ENCODE measurements at regions of chr5 and their contacts with region 1.

Region 1: GRCh38 chr5:181207214-181208107 is 2.5 kb upstream of the TRIM7 start:
- DNase-seq: peak; percentile 92
- H3K4me3 Mint-ChIP-seq: peak overlapping the region; percentile 91
- H3K27ac Mint-ChIP-seq: peak overlapping the region; percentile 91
- H3K4me1 Mint-ChIP-seq: peaks cover 31% of the 10 kb centered on the region
- H3K27me3 Mint-ChIP-seq: peaks cover 28% of the 10 kb centered on the region

Region 2: GRCh38 chr5:181008136-181008535 is 199.3 kb before region 1 on chr5:
- intact Hi-C with region 1: no loop called
- DNase-seq: no peak
- H3K4me3 Mint-ChIP-seq: no peak overlapping the region
- H3K27ac Mint-ChIP-seq: no peak overlapping the region
- H3K4me1 Mint-ChIP-seq: no peaks in the 10 kb centered on the region
- H3K27me3 Mint-ChIP-seq: peaks cover 2% of the 10 kb centered on the region

Region 3: GRCh38 chr5:181173420-181174342 is 33.8 kb before region 1 on chr5:
- intact Hi-C with region 1: loop called (anchors 1 kb)
- DNase-seq: peak; percentile 88
- H3K4me3 Mint-ChIP-seq: peak overlapping the region; percentile 85
- H3K27ac Mint-ChIP-seq: peak overlapping the region; percentile 91
- H3K4me1 Mint-ChIP-seq: peaks cover 37% of the 10 kb centered on the region
- H3K27me3 Mint-ChIP-seq: peaks cover 43% of the 10 kb centered on the region

Region 4: GRCh38 chr5:181191529-181192394 is 15.7 kb before region 1 on chr5:
- intact Hi-C with region 1: loop called (anchors 1 kb)
- DNase-seq: peak; percentile 99
- H3K4me3 Mint-ChIP-seq: peak overlapping the region; percentile 92
- H3K27ac Mint-ChIP-seq: peak overlapping the region; percentile 95
- H3K4me1 Mint-ChIP-seq: peaks cover 40% of the 10 kb centered on the region
- H3K27me3 Mint-ChIP-seq: peaks cover 10% of the 10 kb centered on the region

Region 5: DNA sequence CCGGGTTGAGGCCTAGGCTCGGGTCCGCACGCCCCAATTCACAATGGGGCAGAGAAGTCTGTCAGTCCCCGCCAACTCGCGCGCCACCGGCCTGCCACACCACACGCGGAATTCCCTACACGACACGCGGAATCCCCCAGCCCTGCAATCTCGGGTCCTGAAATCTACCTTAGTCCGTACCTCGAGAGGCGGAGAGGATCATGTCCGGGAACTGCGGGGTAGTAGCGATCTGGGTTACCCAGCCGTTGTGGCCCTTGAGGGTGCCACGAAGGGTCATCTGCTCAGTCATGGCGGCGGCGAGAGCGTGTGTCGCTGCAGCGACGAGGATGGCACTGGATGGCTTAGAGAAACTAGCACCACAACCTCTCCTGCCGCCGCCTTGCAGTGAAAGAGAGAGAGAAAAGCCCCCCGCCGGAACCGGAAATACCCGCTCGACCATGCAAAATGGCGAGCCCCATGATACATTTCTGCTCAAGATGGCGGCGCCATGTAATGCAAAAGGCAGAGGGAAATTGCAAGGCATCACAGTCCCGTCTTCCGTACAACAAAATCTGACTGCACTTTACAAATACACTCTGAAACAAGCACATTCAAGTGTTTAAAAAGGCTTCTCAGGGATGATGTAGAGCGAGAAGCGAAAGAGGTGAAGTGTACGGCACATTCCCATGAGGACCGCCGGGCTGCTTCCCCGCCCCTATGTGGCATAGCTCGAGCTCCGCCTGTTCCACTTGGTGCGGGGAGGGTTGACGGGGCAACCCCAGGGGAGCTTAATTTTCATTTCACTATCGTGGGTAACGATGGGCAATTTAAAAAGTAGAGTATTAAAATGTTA is 36.3 kb after region 1 on chr5 and contains the start of gene RACK1:
- intact Hi-C with region 1: loop called (anchors 1 kb)
- DNase-seq: peak; percentile 96
- H3K4me3 Mint-ChIP-seq: peak within 1 kb of the TSS; percentile 98
- H3K27ac Mint-ChIP-seq: peak within 1 kb of the TSS; percentile 99
- H3K4me1 Mint-ChIP-seq: peaks cover 49% of the 10 kb centered on the region
- H3K27me3 Mint-ChIP-seq: no peaks in the 10 kb centered on the region
- total RNA-seq, gene RACK1: 2,172 and 2,196 TPM in 2 replicates

Measured in activated CD4-positive, alpha-beta T cell treated with anti-CD3 and anti-CD28 coated beads, Interleukin-2, amount 10 ng/mL, durations not matched to agents 24 days and 14 days (primary cell).